ENCODE measurements at regions of chr6 and their contacts with region 1.

Region 1: DNA sequence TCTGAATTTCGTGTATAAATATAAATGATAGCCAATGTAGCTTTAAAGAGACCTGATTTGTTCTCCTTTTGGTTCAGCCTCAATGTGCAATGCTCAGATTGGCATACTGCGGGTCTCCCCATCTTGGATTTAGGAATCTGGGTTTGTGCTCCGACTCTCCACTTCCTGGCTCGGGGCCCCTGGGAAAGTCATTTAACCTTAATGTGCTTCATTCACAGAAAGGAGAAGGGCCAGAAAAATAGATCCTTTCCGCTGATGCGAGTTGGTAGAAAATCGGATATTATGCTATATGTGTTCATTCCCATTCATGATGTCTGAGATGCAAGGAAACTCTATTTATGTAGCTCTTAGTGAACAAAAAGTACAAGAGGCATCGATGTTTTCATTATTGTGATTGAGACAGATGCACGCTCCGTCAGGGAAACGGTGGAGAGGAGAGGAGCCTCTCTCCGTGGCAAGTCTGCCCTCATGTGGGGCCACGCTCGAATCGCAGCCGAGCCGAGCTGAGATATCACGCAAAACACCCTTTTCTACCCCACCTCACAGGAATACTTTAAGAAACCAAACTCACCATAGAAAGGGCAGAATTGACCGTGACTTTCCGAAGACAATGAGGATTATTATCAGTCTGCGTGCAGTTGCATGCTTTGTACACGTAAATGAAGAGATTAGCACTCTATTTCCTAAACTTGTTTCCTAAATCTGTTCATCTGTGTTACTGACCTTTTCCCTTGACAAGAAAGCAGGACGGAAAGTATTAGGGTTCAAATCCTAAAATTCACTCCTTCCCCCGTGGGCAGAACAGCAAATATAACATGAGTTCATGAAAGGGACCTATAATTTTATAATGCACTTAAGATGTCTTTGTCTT is 136.6 kb downstream of the COL9A1 start:
- DNase-seq: peak; percentile 11 to 23
- ATAC-seq: peak; percentile 75 to 77
- H3K4me3 ChIP-seq: no peak overlapping the region
- H3K27ac ChIP-seq: no peak overlapping the region
- H3K4me1 ChIP-seq: no peaks in the 10 kb centered on the region
- H3K27me3 ChIP-seq: peaks cover 0 to 3% (median 0%) of the 10 kb centered on the region in 3 donors
- CTCF ChIP-seq: peak; percentile 22 to 65 (median 48)
- POLR2A ChIP-seq: no peak

Region 2: DNA sequence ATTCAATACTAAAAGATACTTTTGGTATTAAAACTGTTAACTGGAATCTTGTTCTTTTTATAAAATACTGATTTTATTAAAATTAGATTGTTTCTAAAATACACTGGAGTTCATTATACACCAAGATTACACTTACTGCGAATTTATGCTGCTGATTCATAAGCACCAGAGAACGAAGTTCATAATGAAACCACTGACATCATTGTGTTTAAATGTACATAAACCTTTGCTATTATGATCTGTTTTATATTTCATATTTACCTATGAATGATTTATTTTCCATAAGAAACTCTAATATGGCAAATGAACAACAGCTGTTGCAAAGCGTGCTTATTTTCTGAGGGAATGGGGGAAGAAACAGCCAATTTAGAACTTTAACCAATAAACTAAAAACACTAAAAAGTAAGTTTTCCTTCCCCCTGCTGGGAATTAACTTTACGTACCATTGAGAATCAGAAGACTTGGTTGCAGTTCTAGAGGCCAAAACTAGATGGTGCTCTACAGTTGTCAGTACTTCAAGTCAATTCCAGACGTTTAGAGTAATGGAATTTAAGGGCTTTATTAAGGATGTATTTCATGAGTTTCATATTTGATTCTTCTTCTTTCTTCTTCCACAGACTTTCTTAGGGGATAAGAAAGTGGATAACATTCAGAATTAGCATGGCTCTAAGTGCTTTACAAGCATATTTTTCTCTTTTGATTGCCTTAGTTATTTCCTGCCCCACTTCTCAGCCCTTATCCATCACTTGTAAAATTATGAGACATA is 330.7 kb before region 1 on chr6:
- in situ Hi-C with region 1: loop called in 1 of 4 experiments (anchors 10 kb)
- intact Hi-C with region 1: loop called (anchors 2 kb)
- DNase-seq: no peak
- ATAC-seq: peak; percentile 72 to 73
- H3K4me3 ChIP-seq: no peak overlapping the region
- H3K27ac ChIP-seq: no peak overlapping the region
- H3K4me1 ChIP-seq: peaks cover 0 to 5% of the 10 kb centered on the region in 2 donors
- H3K27me3 ChIP-seq: no peaks in the 10 kb centered on the region
- CTCF ChIP-seq: peak; percentile 35 to 80 (median 50)
- POLR2A ChIP-seq: no peak

Region 3: GRCh38 chr6:69848552-69848951 is 317.8 kb before region 1 on chr6:
- in situ Hi-C with region 1: loop called in 1 of 4 experiments (anchors 10 kb)
- intact Hi-C with region 1: no loop called
- DNase-seq: no peak
- ATAC-seq: no peak
- H3K4me3 ChIP-seq: no peak overlapping the region
- H3K27ac ChIP-seq: no peak overlapping the region
- H3K4me1 ChIP-seq: peaks cover 0 to 10% of the 10 kb centered on the region in 2 donors
- H3K27me3 ChIP-seq: no peaks in the 10 kb centered on the region
- CTCF ChIP-seq: no peak
- POLR2A ChIP-seq: no peak

Measured in gastrocnemius medialis (tissue), 4 donors.